Heart right ventricle (tissue), 16 donors: ENCODE measurements at regions of chr14 and their contacts with region 1.

Region 1: GRCh38 chr14:63852817-63853731 is at the start of gene SYNE2:
- DNase-seq: peak; percentile 81 to 84
- ATAC-seq: peak; percentile 88 to 96 (median 94)
- H3K4me3 ChIP-seq: peak within 1 kb of the TSS; percentile 69 to 90 (median 78)
- H3K27ac ChIP-seq: peak within 1 kb of the TSS; percentile 85 to 95 (median 93)
- H3K4me1 ChIP-seq: peaks cover 0 to 58% (median 42%) of the 10 kb centered on the region in 9 donors
- H3K27me3 ChIP-seq: peaks cover 0 to 41% (median 0%) of the 10 kb centered on the region in 7 donors
- CTCF ChIP-seq: peak; percentile 17 to 64 (median 47)
- total RNA-seq, gene SYNE2: 88.4 to 205 (median 110) TPM

Region 2: GRCh38 chr14:63345826-63346225 is 507.2 kb before region 1 on chr14:
- intact Hi-C with region 1: no loop called
- DNase-seq: no peak
- ATAC-seq: no peak
- H3K4me3 ChIP-seq: no peak overlapping the region
- H3K27ac ChIP-seq: no peak overlapping the region
- H3K4me1 ChIP-seq: no peaks in the 10 kb centered on the region
- H3K27me3 ChIP-seq: no peaks in the 10 kb centered on the region
- CTCF ChIP-seq: no peak

Region 3: GRCh38 chr14:63867933-63868921 is 15.2 kb after region 1 on chr14:
- intact Hi-C with region 1: loop called in 1 of 10 experiments (anchors 2 kb)
- DNase-seq: no peak
- ATAC-seq: peak in 1 of 8 donors; percentile 41
- H3K4me3 ChIP-seq: no peak overlapping the region
- H3K27ac ChIP-seq: peak overlapping the region in 5 of 10 donors; percentile 7 to 60 (median 33)
- H3K4me1 ChIP-seq: peaks cover 0 to 58% (median 26%) of the 10 kb centered on the region in 9 donors
- H3K27me3 ChIP-seq: no peaks in the 10 kb centered on the region
- CTCF ChIP-seq: no peak

Region 4: DNA sequence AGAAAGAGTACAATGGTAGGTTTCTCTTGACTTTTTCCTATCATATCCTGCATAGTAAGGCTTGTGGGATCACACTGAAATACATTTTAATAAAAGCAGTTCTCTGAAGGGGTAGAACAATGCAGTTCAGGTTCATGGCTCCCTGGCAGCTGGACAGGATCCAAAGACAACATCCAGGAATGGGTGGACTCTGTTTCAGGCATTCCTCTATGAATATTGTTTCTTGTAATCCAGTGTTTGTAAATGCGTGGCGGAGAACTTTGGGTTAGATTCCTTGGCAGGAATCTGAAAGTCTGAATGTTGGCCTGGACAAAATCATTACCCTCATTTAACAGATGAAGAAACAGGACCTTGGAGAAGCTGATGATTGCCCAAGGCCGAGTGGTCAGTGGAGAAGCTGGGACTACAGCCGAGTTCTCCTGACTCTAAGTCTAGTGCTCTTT is 43.2 kb after region 1 on chr14:
- intact Hi-C with region 1: loop called in 3 of 10 experiments (anchors 5 kb)
- DNase-seq: peak; percentile 29 to 87
- ATAC-seq: peak; percentile 69 to 90 (median 84)
- H3K4me3 ChIP-seq: peak overlapping the region in 1 of 10 donors; percentile 2
- H3K27ac ChIP-seq: peak overlapping the region; percentile 31 to 83 (median 61)
- H3K4me1 ChIP-seq: peaks cover 20 to 99% (median 85%) of the 10 kb centered on the region in 9 donors
- H3K27me3 ChIP-seq: peaks cover 0 to 91% (median 0%) of the 10 kb centered on the region in 7 donors
- CTCF ChIP-seq: no peak

Region 5: GRCh38 chr14:63933110-63933509 is 80.0 kb after region 1 on chr14:
- intact Hi-C with region 1: loop called in 2 of 10 experiments (anchors 5 kb)
- DNase-seq: no peak
- ATAC-seq: peak in 1 of 8 donors; percentile 43
- H3K4me3 ChIP-seq: peak overlapping the region in 1 of 10 donors; percentile 19
- H3K27ac ChIP-seq: peak overlapping the region in 5 of 10 donors; percentile 21 to 61 (median 37)
- H3K4me1 ChIP-seq: peaks cover 0 to 31% (median 14%) of the 10 kb centered on the region in 9 donors
- H3K27me3 ChIP-seq: no peaks in the 10 kb centered on the region
- CTCF ChIP-seq: no peak

Region 6: DNA sequence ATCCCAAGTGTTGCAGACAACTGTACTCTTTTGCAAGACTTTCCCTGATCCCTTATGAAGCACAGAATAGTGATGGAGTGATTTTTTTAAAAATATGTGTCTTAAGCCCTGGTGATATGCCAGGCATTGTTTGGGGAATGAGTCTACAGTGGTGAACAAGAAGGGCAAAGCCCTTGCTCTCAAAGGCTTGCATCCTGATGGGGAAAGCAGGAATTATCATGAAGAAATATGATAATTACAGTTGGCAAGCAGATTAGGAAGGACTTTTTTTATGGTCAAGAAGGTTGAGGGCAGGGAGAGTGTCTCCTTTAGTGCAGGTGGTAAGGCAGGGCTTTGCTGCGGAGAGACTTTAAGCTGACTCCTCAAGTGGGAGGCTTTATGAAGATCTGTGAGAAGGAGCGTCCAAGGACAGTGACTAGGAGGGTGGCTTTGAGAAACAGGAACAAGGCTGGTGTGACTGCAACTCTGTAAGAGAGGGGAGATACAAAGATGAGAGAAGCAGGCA is 99.9 kb after region 1 on chr14:
- intact Hi-C with region 1: loop called in 4 of 10 experiments (anchors 5 to 10 kb)
- DNase-seq: no peak
- ATAC-seq: peak in 7 of 8 donors; percentile 28 to 65 (median 39)
- H3K4me3 ChIP-seq: no peak overlapping the region
- H3K27ac ChIP-seq: peak overlapping the region in 5 of 10 donors; percentile 27 to 54 (median 48)
- H3K4me1 ChIP-seq: peaks cover 7 to 26% (median 10%) of the 10 kb centered on the region in 9 donors
- H3K27me3 ChIP-seq: no peaks in the 10 kb centered on the region
- CTCF ChIP-seq: no peak

Region 7: GRCh38 chr14:63986789-63987533 is 133.9 kb after region 1 on chr14:
- intact Hi-C with region 1: loop called in 2 of 10 experiments (anchors 5 to 10 kb)
- DNase-seq: no peak
- ATAC-seq: peak in 1 of 8 donors; percentile 72
- H3K4me3 ChIP-seq: no peak overlapping the region
- H3K27ac ChIP-seq: no peak overlapping the region
- H3K4me1 ChIP-seq: no peaks in the 10 kb centered on the region
- H3K27me3 ChIP-seq: no peaks in the 10 kb centered on the region
- CTCF ChIP-seq: no peak